Esophagus muscularis mucosa (tissue), 4 donors: ENCODE measurements at regions of chr10 and their contacts with region 1.

Region 1: GRCh38 chr10:51960494-51960895 is 261.1 kb upstream of the CSTF2T start:
- DNase-seq: no peak
- H3K4me3 ChIP-seq: no peak overlapping the region
- H3K27ac ChIP-seq: no peak overlapping the region
- H3K4me1 ChIP-seq: peaks cover 3 to 16% (median 10%) of the 10 kb centered on the region in 4 donors
- H3K27me3 ChIP-seq: no peaks in the 10 kb centered on the region
- CTCF ChIP-seq: peak; percentile 54 to 63 (median 62)
- EP300 ChIP-seq: no peak
- POLR2A ChIP-seq: no peak

Region 2: DNA sequence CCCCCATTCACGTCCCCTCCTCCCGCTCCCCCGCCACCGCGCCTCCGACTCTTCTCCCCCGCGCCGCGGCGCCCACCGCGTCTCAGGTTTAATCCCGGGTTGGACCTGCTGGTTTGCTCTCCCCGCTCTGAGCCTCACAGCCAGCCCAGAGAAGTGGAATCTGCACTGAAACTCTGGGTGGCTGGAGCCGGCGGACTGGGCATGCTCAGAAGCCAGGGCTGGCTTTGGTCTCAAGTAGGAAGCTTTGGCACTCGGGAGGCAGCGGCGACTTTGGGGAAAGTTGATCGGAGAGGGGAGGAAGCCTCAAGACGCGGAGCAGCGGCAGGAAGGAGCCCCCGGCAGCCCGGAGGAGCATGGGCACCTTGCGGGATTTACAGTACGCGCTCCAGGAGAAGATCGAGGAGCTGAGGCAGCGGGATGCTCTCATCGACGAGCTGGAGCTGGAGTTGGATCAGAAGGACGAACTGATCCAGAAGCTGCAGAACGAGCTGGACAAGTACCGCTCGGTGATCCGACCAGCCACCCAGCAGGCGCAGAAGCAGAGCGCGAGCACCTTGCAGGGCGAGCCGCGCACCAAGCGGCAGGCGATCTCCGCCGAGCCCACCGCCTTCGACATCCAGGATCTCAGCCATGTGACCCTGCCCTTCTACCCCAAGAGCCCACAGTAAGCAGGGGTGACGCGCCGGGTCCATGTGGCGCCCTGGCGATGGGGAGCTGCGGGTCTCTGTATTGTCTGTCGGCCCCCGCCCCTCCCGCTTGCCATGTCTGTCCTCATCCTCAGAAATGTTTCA is 886.1 kb before region 1 on chr10 and contains the start of gene PRKG1:
- intact Hi-C with region 1: loop called (anchors 5 kb)
- DNase-seq: peak; percentile 96
- H3K4me3 ChIP-seq: peak within 1 kb of the TSS; percentile 63 to 74 (median 70)
- H3K27ac ChIP-seq: peak within 1 kb of the TSS; percentile 86 to 93 (median 92)
- H3K4me1 ChIP-seq: peaks cover 12 to 47% (median 42%) of the 10 kb centered on the region in 4 donors
- H3K27me3 ChIP-seq: no peaks in the 10 kb centered on the region
- CTCF ChIP-seq: no peak
- EP300 ChIP-seq: no peak
- POLR2A ChIP-seq: no peak
- total RNA-seq, gene PRKG1: 24.5 to 46.1 (median 37.1) TPM

Region 3: DNA sequence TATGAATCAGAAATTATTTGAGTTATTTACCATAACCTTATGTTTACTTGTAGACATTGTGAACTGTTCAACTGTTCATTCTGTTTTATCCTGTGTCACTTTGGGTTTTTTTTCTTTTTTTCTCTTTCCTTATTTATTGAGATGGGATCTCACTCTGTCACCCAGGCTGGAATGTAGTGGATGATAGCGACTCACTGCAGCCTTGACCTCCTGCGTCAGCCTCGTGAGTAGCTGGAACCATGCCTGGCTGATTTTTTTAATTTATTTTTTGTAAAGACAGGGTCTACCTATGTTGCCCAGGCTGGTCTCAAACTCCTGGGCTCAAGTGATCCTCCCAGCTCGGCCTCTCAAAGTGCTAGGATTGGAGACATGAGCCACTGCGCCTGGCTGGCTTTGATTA is 358.2 kb before region 1 on chr10:
- intact Hi-C with region 1: no loop called
- DNase-seq: no peak
- H3K4me3 ChIP-seq: no peak overlapping the region
- H3K27ac ChIP-seq: no peak overlapping the region
- H3K4me1 ChIP-seq: no peaks in the 10 kb centered on the region
- H3K27me3 ChIP-seq: no peaks in the 10 kb centered on the region
- CTCF ChIP-seq: no peak
- EP300 ChIP-seq: no peak
- POLR2A ChIP-seq: no peak

Region 4: DNA sequence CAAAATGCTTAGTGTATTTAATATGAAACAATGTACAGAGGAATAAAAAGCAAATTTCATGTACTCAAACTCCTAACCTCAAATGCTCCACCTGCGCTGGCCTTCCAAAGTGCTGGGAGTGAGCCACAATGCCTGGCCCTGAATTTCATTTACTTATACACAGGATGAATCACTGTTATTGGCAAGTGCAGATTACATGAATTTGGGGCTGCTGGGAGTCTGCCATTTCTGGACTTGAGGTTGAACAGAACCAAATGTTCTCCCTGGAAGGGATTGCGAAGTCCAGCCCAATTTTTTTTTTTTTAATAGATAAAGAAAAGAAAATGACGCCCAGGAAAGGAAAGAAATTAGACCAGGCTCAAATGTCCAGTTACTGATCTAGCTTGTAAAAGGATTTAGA is 254.3 kb before region 1 on chr10:
- intact Hi-C with region 1: loop called (anchors 5 kb)
- DNase-seq: no peak
- H3K4me3 ChIP-seq: no peak overlapping the region
- H3K27ac ChIP-seq: peak overlapping the region; percentile 78 to 86 (median 81)
- H3K4me1 ChIP-seq: peaks cover 28 to 45% (median 40%) of the 10 kb centered on the region in 4 donors
- H3K27me3 ChIP-seq: no peaks in the 10 kb centered on the region
- CTCF ChIP-seq: no peak
- EP300 ChIP-seq: no peak
- POLR2A ChIP-seq: no peak

Region 5: DNA sequence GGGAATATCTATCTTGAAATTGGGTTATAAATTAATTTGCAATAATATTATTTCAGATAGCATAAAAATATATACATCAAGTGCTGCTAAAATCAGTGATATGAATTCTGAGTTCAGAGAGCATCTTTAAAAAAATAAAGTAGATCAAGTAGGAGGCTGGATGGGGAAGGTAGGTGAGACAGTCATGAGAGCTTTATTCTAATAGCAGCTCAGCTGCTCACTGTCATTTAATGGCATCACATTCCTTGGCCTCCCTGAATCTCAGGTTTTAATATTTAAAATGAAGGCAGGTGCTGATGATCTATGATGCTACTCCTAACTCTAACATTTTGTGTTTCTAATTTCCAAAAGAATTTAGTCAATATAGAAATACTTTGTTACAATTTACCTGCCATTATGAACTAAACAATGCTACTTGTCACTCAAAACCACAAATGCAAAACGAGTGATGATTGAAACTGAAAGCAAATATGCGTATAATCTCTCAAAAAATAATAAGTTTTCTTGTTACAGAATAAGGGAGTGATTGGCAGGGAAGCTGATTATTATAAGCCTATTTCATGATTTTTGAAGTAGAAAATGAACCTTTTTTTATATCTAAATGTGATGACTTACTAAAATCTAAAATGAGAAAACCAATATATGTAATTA is 113.5 kb before region 1 on chr10:
- intact Hi-C with region 1: no loop called
- DNase-seq: no peak
- H3K4me3 ChIP-seq: no peak overlapping the region
- H3K27ac ChIP-seq: no peak overlapping the region
- H3K4me1 ChIP-seq: no peaks in the 10 kb centered on the region
- H3K27me3 ChIP-seq: no peaks in the 10 kb centered on the region
- CTCF ChIP-seq: no peak
- EP300 ChIP-seq: no peak
- POLR2A ChIP-seq: no peak

Region 6: DNA sequence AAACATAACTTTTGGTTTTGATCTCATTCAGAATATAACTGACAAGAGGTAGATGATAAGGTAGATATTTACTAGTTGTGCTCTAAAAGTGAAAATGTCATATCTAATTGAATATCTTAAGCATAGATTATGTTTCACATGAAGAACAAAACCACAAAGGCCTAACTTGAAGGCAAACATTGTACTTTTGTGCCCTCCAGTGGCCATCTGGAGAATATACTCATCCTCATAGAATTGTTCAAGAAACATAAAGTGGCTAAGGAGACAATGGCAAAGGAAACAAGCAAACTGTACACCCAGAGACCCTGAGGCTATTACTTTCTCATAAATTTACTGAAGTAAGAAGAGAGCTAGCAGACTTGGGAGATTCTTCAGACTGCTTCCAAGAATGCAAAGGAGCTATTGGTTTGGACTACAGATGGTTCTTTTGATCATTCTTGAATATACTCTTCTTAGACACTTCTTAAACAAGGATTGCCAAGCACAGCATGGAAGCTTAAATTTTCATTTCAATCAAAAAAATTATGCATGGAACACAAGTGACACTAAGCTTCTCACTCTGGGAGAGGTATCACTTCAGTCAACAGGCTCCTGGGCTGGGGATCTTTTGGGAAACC is 255.4 kb after region 1 on chr10:
- intact Hi-C with region 1: loop called (anchors 10 kb)
- DNase-seq: no peak
- H3K4me3 ChIP-seq: no peak overlapping the region
- H3K27ac ChIP-seq: no peak overlapping the region
- H3K4me1 ChIP-seq: peaks cover 0 to 11% (median 0%) of the 10 kb centered on the region in 4 donors
- H3K27me3 ChIP-seq: no peaks in the 10 kb centered on the region
- CTCF ChIP-seq: peak; percentile 72 to 79 (median 74)
- EP300 ChIP-seq: no peak
- POLR2A ChIP-seq: no peak